IMR-90 (cell line): ENCODE measurements at regions of chr15 and their contacts with region 1.

Region 1: DNA sequence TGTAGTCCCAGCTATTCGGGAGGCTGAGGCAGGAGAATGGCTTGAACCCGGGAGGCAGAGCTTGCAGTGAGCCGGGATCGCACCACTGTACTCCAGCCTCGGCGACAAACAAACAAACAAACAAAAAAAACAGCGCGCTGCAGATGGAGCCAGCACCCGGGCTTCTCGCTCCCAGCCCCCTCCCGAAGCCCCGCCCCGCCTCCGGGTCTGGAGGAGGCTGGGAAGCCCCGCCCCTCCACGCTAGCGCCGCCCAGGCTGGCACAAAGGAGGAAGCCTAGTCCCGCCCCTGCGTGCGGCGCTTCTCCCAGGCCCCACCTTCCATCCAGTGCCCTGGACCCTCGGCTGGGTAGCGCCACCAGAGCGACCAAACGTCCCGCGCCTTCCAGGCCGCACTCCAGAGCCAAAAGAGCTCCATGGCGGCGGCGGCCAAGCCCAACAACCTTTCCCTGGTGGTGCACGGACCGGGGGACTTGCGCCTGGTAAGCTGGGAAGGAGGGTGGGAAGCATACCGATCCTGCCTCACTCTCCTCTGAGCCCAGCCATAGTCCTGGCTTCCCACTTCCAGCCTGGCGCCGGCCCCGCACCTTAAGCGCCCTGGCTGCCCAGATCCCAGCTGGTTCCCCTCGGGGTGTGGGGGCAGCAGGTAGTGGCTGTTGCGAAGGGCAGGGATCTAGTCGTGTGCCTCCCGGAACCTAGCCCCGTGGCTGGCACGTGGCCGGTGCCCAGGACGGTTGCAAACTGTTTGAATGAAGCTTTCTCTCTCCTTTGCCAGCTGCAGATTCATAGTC is at the start of gene SORD:
- DNase-seq: peak; percentile 69
- ATAC-seq: peak; percentile 99
- H3K4me3 ChIP-seq: peak within 1 kb of the TSS; percentile 95
- H3K27ac ChIP-seq: peak within 1 kb of the TSS; percentile 81
- H3K4me1 ChIP-seq: peaks cover 4% of the 10 kb centered on the region; the same call in 1 of the 2 replicates
- H3K27me3 ChIP-seq: no peaks in the 10 kb centered on the region; the same call in 1 of the 2 replicates
- CTCF ChIP-seq: no peak
- POLR2A ChIP-seq: no peak
- RAD21 ChIP-seq: no peak
- total RNA-seq, gene SORD: 21.9 and 34.2 TPM in 2 replicates

Region 2: DNA sequence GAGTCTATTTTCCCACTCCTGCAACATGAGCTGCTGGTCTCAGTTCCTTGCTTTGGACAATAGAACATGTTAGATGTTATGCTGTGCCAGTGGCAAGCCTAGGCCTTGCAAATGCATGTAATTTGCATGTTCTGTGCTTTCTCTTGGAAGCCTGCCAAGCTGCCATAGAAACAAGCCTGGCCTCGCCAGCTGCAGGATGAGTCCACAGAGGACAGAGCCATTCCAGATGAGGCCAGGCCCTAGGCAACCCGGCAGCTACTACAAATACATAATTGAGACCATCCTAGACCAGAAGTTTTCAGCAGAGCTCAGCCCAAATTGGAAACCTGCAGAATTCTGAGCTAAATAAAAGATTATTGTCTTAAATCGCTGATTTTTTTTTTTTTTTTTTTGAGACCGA is 247.1 kb before region 1 on chr15:
- CTCF ChIA-PET with region 1: no interaction called
- POLR2A ChIA-PET with region 1: no interaction called
- dilution Hi-C with region 1: no loop called
- in situ Hi-C with region 1: no loop called
- intact Hi-C with region 1: no loop called
- DNase-seq: no peak
- ATAC-seq: no peak
- H3K4me3 ChIP-seq: no peak overlapping the region
- H3K27ac ChIP-seq: no peak overlapping the region
- H3K4me1 ChIP-seq: no peaks in the 10 kb centered on the region
- H3K27me3 ChIP-seq: no peaks in the 10 kb centered on the region
- CTCF ChIP-seq: no peak
- POLR2A ChIP-seq: no peak
- RAD21 ChIP-seq: no peak

Region 3: DNA sequence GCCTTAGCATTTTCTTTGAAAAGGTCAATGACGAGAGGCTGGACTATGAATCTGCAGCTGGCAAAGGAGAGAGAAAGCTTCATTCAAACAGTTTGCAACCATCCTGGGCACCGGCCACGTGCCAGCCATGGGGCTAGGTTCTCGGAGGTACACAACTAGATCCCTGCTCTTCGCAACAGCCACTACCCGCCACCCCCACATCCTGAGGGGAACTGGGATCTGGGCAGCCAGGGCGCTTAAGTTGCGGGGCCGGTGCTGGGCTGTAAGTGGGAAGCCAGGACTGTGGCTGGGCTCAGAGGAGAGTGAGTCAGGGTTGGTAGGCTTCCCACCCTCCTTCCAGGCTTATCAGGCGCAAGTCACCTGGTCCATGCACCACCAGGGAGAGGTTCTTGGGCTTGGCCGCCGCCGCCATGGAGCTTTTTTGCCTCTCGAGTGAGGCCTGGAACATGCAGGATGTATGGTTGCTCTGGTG is 161.6 kb before region 1 on chr15:
- CTCF ChIA-PET with region 1: no interaction called
- POLR2A ChIA-PET with region 1: no interaction called
- dilution Hi-C with region 1: no loop called
- in situ Hi-C with region 1: loop called (anchors 5 kb)
- intact Hi-C with region 1: loop called (anchors 5 kb)
- DNase-seq: no peak
- ATAC-seq: no peak
- H3K4me3 ChIP-seq: no peak overlapping the region
- H3K27ac ChIP-seq: no peak overlapping the region
- H3K4me1 ChIP-seq: no peaks in the 10 kb centered on the region
- H3K27me3 ChIP-seq: no peaks in the 10 kb centered on the region
- CTCF ChIP-seq: no peak
- POLR2A ChIP-seq: no peak
- RAD21 ChIP-seq: no peak

Region 4: DNA sequence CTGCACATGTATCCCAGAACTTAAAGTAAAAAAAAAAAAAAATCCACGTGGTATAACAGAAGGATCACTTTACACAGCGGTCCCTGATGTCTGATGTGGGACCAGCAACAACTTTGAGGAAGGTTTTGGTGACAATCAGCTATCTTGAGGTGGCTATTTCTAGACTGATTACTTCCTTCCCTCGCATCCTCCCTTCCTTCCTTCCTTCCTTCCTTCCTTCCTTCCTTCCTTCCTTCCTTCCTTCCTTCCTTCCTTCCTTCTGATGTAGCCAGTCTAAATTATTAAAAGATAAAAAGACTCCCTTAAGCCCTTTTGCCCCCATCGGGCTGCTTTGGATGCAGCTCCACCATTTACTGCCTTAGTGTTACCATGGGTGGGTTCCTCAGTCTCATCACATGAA is 14.9 kb after region 1 on chr15:
- CTCF ChIA-PET with region 1: interaction called, 3 read pairs
- POLR2A ChIA-PET with region 1: no interaction called
- dilution Hi-C with region 1: no loop called
- in situ Hi-C with region 1: no loop called
- intact Hi-C with region 1: loop called (anchors 2 kb)
- DNase-seq: no peak
- ATAC-seq: no peak
- H3K4me3 ChIP-seq: no peak overlapping the region
- H3K27ac ChIP-seq: no peak overlapping the region
- H3K4me1 ChIP-seq: no peaks in the 10 kb centered on the region
- H3K27me3 ChIP-seq: no peaks in the 10 kb centered on the region
- CTCF ChIP-seq: no peak
- POLR2A ChIP-seq: no peak
- RAD21 ChIP-seq: no peak

Region 5: DNA sequence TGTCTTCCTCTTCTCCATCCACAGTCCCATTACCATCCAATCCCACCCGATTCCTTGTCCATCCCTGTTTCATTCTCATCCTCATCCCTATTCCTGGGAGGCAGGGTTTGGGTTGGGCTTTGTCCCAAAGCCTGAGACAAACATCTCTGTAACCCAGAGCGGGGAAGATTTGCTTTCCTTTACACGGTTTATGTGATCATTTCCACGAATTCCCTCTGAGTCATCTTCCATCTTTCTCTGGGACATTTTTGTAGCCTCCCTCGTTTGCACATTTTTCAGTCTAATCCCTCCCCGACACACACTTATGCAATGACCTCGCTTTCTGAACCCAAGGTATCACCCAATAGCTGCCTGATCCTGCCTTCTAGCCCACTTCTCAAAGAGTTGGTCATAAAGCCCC is 68.1 kb after region 1 on chr15:
- CTCF ChIA-PET with region 1: no interaction called
- POLR2A ChIA-PET with region 1: no interaction called
- dilution Hi-C with region 1: no loop called
- in situ Hi-C with region 1: no loop called
- intact Hi-C with region 1: loop called (anchors 5 kb)
- DNase-seq: peak; percentile 66
- ATAC-seq: peak; percentile 83
- H3K4me3 ChIP-seq: no peak overlapping the region
- H3K27ac ChIP-seq: peak overlapping the region; percentile 96
- H3K4me1 ChIP-seq: peaks cover 10% of the 10 kb centered on the region; the same call in 1 of the 2 replicates
- H3K27me3 ChIP-seq: peaks cover 36% of the 10 kb centered on the region
- CTCF ChIP-seq: no peak
- POLR2A ChIP-seq: no peak
- RAD21 ChIP-seq: no peak

Region 6: GRCh38 chr15:45187894-45188830 is 165.1 kb after region 1 on chr15 and contains the start of gene SHF:
- CTCF ChIA-PET with region 1: no interaction called
- POLR2A ChIA-PET with region 1: no interaction called
- dilution Hi-C with region 1: no loop called
- in situ Hi-C with region 1: no loop called
- intact Hi-C with region 1: no loop called
- DNase-seq: peak; percentile 45
- ATAC-seq: peak; percentile 76
- H3K4me3 ChIP-seq: peak within 1 kb of the TSS; percentile 68
- H3K27ac ChIP-seq: no peak within 1 kb of the TSS
- H3K4me1 ChIP-seq: peaks cover 8% of the 10 kb centered on the region
- H3K27me3 ChIP-seq: peaks cover 12% of the 10 kb centered on the region
- CTCF ChIP-seq: no peak
- POLR2A ChIP-seq: peak; percentile 52; the same call in 1 of the 2 replicates
- RAD21 ChIP-seq: no peak
- total RNA-seq, gene SHF: 1.8 and 2.2 TPM in 2 replicates